H1 (cell line): ENCODE measurements at regions of chr22 and their contacts with region 1.

Region 1: DNA sequence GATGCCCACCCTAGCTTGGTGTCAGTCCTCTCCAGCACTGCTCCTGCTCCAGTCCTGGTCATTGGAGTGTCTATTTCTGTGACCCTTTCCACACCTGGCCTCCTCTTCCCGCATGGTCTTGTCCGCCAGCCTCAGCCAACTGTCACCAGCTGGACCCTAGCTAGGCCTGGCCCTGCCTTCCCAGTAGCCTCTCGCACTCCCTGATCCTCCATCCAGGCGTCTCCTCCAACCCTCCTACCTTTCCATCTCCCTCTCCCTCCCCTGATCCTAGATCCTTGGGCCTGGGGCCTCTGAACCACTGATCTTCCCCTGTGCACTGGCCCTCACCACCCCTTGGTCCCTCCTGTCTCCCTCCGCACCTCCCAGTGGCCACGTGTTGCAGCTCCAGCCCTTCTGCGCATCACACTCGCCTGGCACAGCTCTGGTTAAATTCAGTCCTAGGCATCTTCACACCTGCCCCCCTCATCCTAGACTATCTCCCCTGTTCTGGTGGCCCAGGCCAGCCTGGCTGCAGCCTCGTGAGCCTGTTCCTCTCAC is 9.9 kb downstream of the SYNGR1 start:
- DNase-seq: no peak
- H3K4me3 ChIP-seq: no peak overlapping the region
- H3K27ac ChIP-seq: no peak overlapping the region
- H3K4me1 ChIP-seq: peaks cover 4 to 39% (median 26%) of the 10 kb centered on the region in 4 experiments
- H3K27me3 ChIP-seq: 0 out of 7 replicates have a peak, but pooled peaks cover 0 to 2% (median 0%) of the 10 kb centered on the region in 4 experiments
- CTCF ChIP-seq: peak in 1 of 3 experiments; percentile 3; a peak in 1 of 4 replicates
- EP300 ChIP-seq: no peak
- POLR2A ChIP-seq: no peak
- RAD21 ChIP-seq: no peak

Region 2: DNA sequence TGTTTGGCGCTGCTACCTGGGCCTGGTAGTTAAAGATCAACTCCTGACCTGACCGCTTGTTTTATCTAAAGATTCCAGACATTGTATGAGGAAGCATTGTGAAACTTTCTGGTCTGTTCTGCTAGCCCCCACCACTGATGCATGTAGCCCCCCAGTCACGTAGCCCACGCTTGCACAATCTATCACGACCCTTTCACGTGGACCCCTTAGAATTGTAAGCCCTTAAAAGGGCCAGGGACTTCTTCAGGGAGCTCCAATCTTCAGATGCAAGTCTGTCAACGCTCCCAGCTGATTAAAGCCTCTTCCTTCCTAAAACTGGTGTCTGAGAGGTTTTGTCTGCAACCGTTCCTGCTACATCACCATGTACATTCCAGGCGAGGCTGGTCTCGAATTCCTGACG is 304.1 kb before region 1 on chr22:
- CTCF ChIA-PET with region 1: no interaction called
- POLR2A ChIA-PET with region 1: no interaction called
- DNase-seq: no peak
- H3K4me3 ChIP-seq: no peak overlapping the region
- H3K27ac ChIP-seq: no peak overlapping the region
- H3K4me1 ChIP-seq: peaks cover 3 to 14% (median 5%) of the 10 kb centered on the region in 4 experiments; a peak in 6 of 7 replicates
- H3K27me3 ChIP-seq: no peaks in the 10 kb centered on the region
- CTCF ChIP-seq: no peak
- EP300 ChIP-seq: no peak
- POLR2A ChIP-seq: no peak
- RAD21 ChIP-seq: no peak

Region 3: GRCh38 chr22:39223201-39223641 is 136.5 kb before region 1 on chr22:
- CTCF ChIA-PET with region 1: no interaction called
- POLR2A ChIA-PET with region 1: no interaction called
- DNase-seq: no peak
- H3K4me3 ChIP-seq: no peak overlapping the region
- H3K27ac ChIP-seq: no peak overlapping the region
- H3K4me1 ChIP-seq: peaks cover 0 to 2% (median under 1%) of the 10 kb centered on the region in 4 experiments; a peak in 2 of 7 replicates
- H3K27me3 ChIP-seq: no peaks in the 10 kb centered on the region; a peak in 1 of 7 replicates
- CTCF ChIP-seq: no peak
- EP300 ChIP-seq: no peak
- POLR2A ChIP-seq: no peak
- RAD21 ChIP-seq: no peak

Region 4: GRCh38 chr22:39275814-39276436 is 83.8 kb before region 1 on chr22:
- CTCF ChIA-PET with region 1: no interaction called
- POLR2A ChIA-PET with region 1: no interaction called
- DNase-seq: no peak
- H3K4me3 ChIP-seq: no peak overlapping the region
- H3K27ac ChIP-seq: no peak overlapping the region
- H3K4me1 ChIP-seq: peaks cover 0 to 10% (median 7%) of the 10 kb centered on the region in 4 experiments; a peak in 6 of 7 replicates
- H3K27me3 ChIP-seq: no peaks in the 10 kb centered on the region
- CTCF ChIP-seq: peak in 1 of 3 experiments; percentile 12; a peak in 1 of 4 replicates
- EP300 ChIP-seq: no peak
- POLR2A ChIP-seq: no peak
- RAD21 ChIP-seq: no peak

Region 5: GRCh38 chr22:39332441-39333064 is 27.2 kb before region 1 on chr22:
- CTCF ChIA-PET with region 1: interaction called, 11 read pairs
- POLR2A ChIA-PET with region 1: interaction called, 4 read pairs
- DNase-seq: no peak
- H3K4me3 ChIP-seq: no peak overlapping the region
- H3K27ac ChIP-seq: no peak overlapping the region
- H3K4me1 ChIP-seq: no peaks in the 10 kb centered on the region
- H3K27me3 ChIP-seq: no peaks in the 10 kb centered on the region
- CTCF ChIP-seq: no peak
- EP300 ChIP-seq: no peak
- POLR2A ChIP-seq: no peak
- RAD21 ChIP-seq: no peak